ENCODE measurements at regions of chr4 and their contacts with region 1.

Region 1: GRCh38 chr4:89226665-89227574 is 80.7 kb downstream of the GPRIN3 start:
- DNase-seq: peak; percentile 85
- H3K4me3 ChIP-seq: peak overlapping the region; percentile 63
- H3K27ac ChIP-seq: no peak overlapping the region
- H3K4me1 ChIP-seq: peaks cover 4% of the 10 kb centered on the region; the same call in 1 of the 2 replicates
- H3K27me3 ChIP-seq: no peaks in the 10 kb centered on the region

Region 2: GRCh38 chr4:89420507-89420906 is 193.6 kb after region 1 on chr4:
- in situ Hi-C with region 1: loop called (anchors 10 kb)
- DNase-seq: peak; percentile 56
- H3K4me3 ChIP-seq: no peak overlapping the region
- H3K27ac ChIP-seq: no peak overlapping the region
- H3K4me1 ChIP-seq: peaks cover 15% of the 10 kb centered on the region
- H3K27me3 ChIP-seq: no peaks in the 10 kb centered on the region

Region 3: GRCh38 chr4:89914609-89915550 is 688.0 kb after region 1 on chr4:
- in situ Hi-C with region 1: loop called (anchors 25 kb)
- DNase-seq: no peak
- H3K4me3 ChIP-seq: no peak overlapping the region
- H3K27ac ChIP-seq: no peak overlapping the region
- H3K4me1 ChIP-seq: no peaks in the 10 kb centered on the region
- H3K27me3 ChIP-seq: no peaks in the 10 kb centered on the region

Measured in GM23248 (cell line).